ENCODE measurements at regions of chr1 and their contacts with region 1.

Region 1: DNA sequence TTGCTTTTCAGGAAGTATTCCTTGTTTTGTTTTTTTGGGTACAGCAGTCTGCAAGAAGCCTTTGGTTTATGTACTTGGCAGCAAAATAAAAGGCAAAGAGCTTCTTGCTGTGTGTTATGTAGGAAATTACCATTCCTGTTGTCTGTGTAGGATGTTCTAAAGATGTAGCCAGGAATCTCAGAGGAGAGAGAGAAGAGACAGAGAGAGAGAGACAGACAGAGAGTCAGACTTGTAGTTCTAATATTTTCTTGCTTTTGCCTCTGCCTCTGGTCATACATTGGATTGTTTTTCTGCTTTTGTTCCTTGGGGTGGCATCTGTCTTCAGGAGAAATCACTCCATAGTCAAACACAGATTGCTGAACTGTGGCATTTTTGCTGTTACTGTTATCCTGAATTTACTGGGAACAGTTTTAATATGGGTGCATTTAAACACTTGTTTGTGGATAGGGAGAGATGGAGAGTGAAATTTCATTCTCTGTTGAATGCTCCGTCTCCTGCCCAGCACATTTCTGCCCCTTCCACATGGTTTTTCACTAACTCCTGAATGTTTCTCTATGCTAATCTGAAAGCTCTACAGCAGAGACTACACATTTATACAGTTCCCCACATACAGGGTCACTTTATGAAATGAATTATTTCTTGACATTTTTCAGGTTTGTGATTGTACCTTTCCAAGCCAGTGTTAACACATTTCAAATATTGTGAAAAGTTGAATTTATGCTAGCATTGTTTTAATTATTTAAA is 49.8 kb downstream of the POU2F1 start:
- H3K4me3 ChIP-seq: no peak overlapping the region
- H3K27ac ChIP-seq: no peak overlapping the region
- H3K4me1 ChIP-seq: peaks cover 16% of the 10 kb centered on the region
- CTCF ChIP-seq: no peak

Region 2: GRCh38 chr1:167252986-167253385 is 17.5 kb before region 1 on chr1:
- CTCF ChIA-PET with region 1: interaction called, 20 read pairs
- POLR2A ChIA-PET with region 1: no interaction called
- H3K4me3 ChIP-seq: no peak overlapping the region
- H3K27ac ChIP-seq: no peak overlapping the region
- H3K4me1 ChIP-seq: peaks cover 9% of the 10 kb centered on the region
- CTCF ChIP-seq: no peak

Region 3: DNA sequence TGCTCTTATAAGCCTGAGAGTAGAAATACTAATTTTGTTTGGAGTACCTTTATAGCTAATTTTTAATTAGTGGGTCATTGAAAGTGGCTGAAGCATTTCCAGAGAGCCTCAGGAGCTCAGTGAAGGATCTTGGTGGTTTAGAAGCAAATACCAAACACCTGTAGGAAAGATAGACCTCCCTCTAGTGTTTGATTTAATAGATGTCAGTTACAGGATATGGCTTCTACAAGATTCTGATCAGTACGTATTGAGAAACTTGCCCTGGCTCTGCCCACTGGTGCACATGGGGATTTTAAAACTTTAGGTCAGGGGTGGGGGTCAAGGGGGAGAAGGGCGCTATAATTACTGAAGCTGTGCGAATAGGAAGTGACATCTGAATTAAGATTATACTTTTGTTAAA is 72.3 kb after region 1 on chr1:
- CTCF ChIA-PET with region 1: interaction called, 15 read pairs
- POLR2A ChIA-PET with region 1: no interaction called
- H3K4me3 ChIP-seq: no peak overlapping the region
- H3K27ac ChIP-seq: no peak overlapping the region
- H3K4me1 ChIP-seq: no peaks in the 10 kb centered on the region
- CTCF ChIP-seq: no peak

Region 4: GRCh38 chr1:167442124-167442848 is 171.8 kb after region 1 on chr1:
- CTCF ChIA-PET with region 1: interaction called, 41 read pairs
- POLR2A ChIA-PET with region 1: no interaction called
- H3K4me3 ChIP-seq: no peak overlapping the region
- H3K27ac ChIP-seq: no peak overlapping the region
- H3K4me1 ChIP-seq: no peaks in the 10 kb centered on the region
- CTCF ChIP-seq: peak; percentile 85

Measured in HEK293 (cell line).